ENCODE measurements at regions of chr22 and their contacts with region 1.

Region 1: DNA sequence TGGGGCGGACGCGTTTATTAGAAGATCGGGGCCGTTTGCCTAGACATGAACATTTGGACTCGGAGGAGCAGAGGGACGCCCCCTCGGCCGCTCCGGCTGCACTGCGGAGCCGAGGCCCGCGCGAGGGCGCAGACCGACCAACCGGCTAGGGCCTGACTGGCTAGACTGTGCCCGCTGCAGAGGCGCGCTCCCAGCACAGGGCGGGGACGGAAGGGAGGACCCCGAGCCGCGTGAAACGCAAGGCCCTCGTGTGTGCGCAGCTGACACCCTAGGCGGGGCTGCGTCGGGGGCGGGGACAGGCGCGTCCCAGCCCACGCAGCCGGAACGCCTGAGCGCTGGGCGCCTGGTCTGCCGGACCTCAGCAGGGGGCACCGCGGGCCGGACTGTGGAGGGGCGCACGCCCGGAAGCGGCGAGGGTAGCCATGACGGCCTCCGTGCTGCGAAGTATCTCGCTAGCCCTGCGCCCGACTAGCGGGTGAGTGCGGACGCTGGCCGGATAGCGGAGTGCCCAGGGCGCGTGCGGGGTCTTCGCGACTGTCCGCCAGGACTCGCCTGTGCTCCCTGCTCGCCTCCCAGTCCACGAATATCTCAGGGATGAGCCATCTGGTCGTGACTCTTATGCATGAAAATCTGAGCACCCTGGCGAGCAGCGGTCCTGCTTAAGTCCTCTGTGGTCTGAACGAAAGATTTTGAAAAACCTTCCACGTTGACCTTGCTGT is at the start of gene MRPL40:
- DNase-seq: peak; percentile 96
- H3K4me3 ChIP-seq: peak within 1 kb of the TSS; percentile 85 to 93 (median 90)
- H3K27ac ChIP-seq: peak within 1 kb of the TSS; percentile 91 to 99 (median 96)
- H3K4me1 ChIP-seq: peaks cover 0 to 30% (median 29%) of the 10 kb centered on the region in 4 donors
- H3K27me3 ChIP-seq: no peaks in the 10 kb centered on the region
- CTCF ChIP-seq: no peak
- EP300 ChIP-seq: peak in 1 of 4 donors; percentile 46
- POLR2A ChIP-seq: peak; percentile 79 to 82
- total RNA-seq, gene MRPL40: 19.5 to 32.3 (median 26.4) TPM

Region 2: DNA sequence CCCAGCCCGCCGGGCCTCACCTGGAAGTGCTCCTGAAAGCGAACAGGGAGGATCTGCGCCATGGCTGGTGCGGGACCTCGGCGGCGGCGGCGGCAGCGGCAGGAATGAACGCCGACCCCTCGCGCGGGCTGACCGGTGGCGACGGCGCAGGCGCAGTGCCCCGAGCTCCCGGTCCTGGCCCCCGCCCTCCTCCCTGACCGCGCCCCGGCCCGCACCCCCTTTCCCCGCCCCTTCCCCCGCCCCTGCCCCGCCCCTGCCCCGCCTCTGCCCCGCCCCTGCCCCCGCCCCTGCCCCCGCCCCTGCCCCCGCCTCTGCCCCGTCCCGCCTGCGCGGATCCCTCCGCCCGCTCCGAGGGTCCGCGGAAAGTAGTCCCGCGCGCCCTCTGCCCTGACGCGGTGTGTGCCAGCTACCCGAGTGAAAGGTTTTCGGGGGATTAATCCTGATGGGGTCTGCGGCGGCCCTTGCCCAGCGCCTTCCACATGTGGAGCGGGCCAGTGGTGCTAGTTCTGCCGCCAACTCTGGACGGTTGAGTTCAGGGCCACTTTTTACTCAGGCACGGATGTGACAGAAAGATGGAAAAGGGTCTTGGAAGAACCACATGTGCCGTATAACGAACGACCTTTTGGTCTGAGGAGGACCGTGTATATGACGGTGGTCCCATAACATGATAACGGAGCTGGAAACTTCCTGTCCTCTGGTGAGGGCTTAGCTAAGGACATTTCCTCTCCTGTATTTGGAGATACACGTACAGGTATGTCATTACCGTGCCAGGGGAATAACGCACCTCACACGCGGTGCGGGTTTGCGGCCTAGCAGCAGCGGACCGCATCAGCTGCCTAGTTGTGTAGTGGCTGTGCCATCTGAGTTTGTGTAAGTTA is 140.5 kb before region 1 on chr22 and contains the start of gene CLTCL1:
- intact Hi-C with region 1: loop called (anchors 10 kb)
- DNase-seq: peak; percentile 90
- H3K4me3 ChIP-seq: peak within 1 kb of the TSS; percentile 80 to 95 (median 88)
- H3K27ac ChIP-seq: peak within 1 kb of the TSS; percentile 70 to 82 (median 76)
- H3K4me1 ChIP-seq: peaks cover 0 to 23% (median 13%) of the 10 kb centered on the region in 4 donors
- H3K27me3 ChIP-seq: no peaks in the 10 kb centered on the region
- CTCF ChIP-seq: no peak
- EP300 ChIP-seq: no peak
- POLR2A ChIP-seq: no peak
- total RNA-seq, gene CLTCL1: 2.4 to 5.0 (median 4.0) TPM

Region 3: GRCh38 chr22:19410941-19411689 is 21.2 kb before region 1 on chr22:
- intact Hi-C with region 1: no loop called
- DNase-seq: no peak
- H3K4me3 ChIP-seq: no peak overlapping the region
- H3K27ac ChIP-seq: no peak overlapping the region
- H3K4me1 ChIP-seq: peaks cover 0 to 8% (median 0%) of the 10 kb centered on the region in 4 donors
- H3K27me3 ChIP-seq: no peaks in the 10 kb centered on the region
- CTCF ChIP-seq: no peak
- EP300 ChIP-seq: no peak
- POLR2A ChIP-seq: no peak

Region 4: GRCh38 chr22:19479357-19480172 is 47.3 kb after region 1 on chr22 and contains the start of gene CDC45:
- intact Hi-C with region 1: loop called (anchors 1 kb)
- DNase-seq: peak; percentile 98
- H3K4me3 ChIP-seq: peak within 1 kb of the TSS; percentile 82 to 97 (median 86)
- H3K27ac ChIP-seq: peak within 1 kb of the TSS; percentile 87 to 94 (median 91)
- H3K4me1 ChIP-seq: peaks cover 0 to 35% (median 21%) of the 10 kb centered on the region in 4 donors
- H3K27me3 ChIP-seq: no peaks in the 10 kb centered on the region
- CTCF ChIP-seq: no peak
- EP300 ChIP-seq: no peak
- POLR2A ChIP-seq: no peak
- total RNA-seq, gene CDC45: 0.14 TPM in 1 of 4 donors, not detected in the others